ENCODE measurements at regions of chr14 and their contacts with region 1.

Region 1: GRCh38 chr14:63276492-63277342 is 42.0 kb downstream of the GPHB5 start:
- DNase-seq: no peak
- ATAC-seq: peak; percentile 49
- H3K4me3 ChIP-seq: no peak overlapping the region
- H3K4me1 ChIP-seq: no peaks in the 10 kb centered on the region
- CTCF ChIP-seq: peak; percentile 43

Region 2: GRCh38 chr14:62162998-62163589 is 1113.6 kb before region 1 on chr14:
- intact Hi-C with region 1: loop called in 1 of 2 experiments (anchors 10 kb)
- DNase-seq: peak in 1 of 3 donors; percentile 10
- ATAC-seq: no peak
- H3K4me3 ChIP-seq: no peak overlapping the region
- H3K4me1 ChIP-seq: no peaks in the 10 kb centered on the region
- CTCF ChIP-seq: no peak

Region 3: GRCh38 chr14:63174760-63175211 is 101.9 kb before region 1 on chr14:
- intact Hi-C with region 1: loop called in 1 of 2 experiments (anchors 5 kb)
- DNase-seq: peak in 1 of 3 donors; percentile 15
- ATAC-seq: no peak
- H3K4me3 ChIP-seq: no peak overlapping the region
- H3K4me1 ChIP-seq: no peaks in the 10 kb centered on the region
- CTCF ChIP-seq: no peak

Region 4: GRCh38 chr14:63203618-63204406 is 72.9 kb before region 1 on chr14:
- intact Hi-C with region 1: no loop called
- DNase-seq: peak; percentile 34 to 58 (median 52)
- ATAC-seq: peak; percentile 73
- H3K4me3 ChIP-seq: no peak overlapping the region
- H3K4me1 ChIP-seq: no peaks in the 10 kb centered on the region
- CTCF ChIP-seq: no peak

Region 5: DNA sequence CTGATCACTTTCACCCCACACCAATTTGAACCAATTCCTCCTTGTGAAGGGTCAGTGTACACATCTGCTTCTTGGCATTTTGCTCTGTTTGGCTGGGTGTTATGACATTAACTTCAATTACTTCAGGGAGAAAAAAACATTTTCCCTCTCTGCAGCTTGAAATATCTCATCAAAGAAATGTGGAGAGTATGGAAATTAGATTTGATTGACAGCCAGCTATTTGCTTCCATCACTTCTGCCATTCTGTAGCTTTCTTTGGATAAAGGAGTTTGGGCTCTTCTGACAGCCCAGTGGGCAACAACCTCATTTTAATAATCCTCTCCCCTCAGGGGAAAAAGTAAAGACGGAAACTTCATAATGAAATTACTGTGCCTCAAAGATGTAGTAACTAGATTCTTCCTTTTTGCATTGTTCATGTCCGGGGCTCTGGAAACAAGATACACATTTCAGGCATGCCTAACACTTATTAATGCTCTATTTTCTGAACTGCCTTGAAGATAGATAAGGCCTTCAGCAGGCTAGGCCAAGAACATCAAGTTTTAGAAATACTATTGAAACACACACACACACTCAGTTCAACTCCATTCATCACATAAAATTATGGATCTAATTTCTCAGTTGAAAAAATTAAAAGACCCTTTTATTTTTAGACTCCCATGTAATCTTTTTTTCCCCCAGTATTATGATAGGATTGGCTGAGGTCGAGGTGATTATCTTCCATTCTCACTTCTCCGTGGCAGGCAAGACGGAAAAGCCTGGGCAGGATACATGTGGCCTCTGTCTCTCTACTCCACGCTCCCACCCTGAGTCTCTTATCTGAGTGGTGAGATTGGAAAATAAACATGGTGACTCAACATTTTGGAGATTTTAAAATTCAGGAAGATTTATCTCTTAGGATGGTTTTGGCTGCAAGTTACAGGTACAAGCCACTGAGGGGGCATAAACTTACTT is 52.3 kb after region 1 on chr14:
- intact Hi-C with region 1: no loop called
- DNase-seq: no peak
- ATAC-seq: no peak
- H3K4me3 ChIP-seq: no peak overlapping the region
- H3K4me1 ChIP-seq: no peaks in the 10 kb centered on the region
- CTCF ChIP-seq: no peak

Region 6: DNA sequence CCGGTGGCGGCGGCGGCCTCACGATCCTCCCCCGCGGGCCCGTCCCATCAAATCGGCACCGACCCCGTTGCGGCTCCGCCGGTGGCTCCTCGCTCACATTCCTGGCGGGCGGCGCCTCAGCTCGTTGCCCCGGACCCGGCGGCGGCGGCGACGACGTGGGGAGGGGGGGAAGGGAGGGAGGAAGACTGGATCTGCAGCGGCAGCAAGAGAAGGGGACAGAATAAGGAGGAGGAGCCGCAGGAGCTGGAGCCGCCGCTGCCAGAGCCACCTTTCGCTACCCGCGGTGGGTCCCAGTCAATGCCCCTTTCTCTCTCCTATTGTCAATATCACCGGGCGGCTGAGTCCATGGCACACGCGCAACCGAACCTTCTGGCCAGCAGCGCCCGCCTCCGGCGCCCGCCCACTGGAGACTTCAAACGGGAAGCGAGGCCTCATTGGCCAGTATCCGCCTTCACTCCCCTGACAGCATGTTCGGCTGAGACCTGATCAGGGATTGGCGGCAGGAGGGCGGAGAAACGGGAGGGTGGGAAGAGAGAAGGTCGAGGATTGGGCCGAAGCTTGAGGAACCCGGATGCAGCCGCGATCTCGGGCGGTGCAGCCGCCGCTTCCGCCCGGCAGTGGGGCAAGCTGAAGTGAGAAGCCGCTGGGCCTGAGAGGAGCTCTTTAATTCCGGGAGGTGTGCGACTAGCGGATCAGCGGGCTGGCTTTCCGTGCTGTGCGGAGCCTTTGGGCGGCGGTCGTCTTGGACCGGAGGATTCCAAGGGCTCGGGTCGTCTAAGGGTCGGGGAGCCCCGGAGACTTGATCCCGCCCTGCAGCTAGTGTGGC is 266.5 kb after region 1 on chr14 and contains the start of gene PPP2R5E:
- intact Hi-C with region 1: no loop called
- DNase-seq: peak; percentile 98
- ATAC-seq: peak; percentile 97
- H3K4me3 ChIP-seq: peak within 1 kb of the TSS; percentile 86
- H3K4me1 ChIP-seq: peaks cover 19% of the 10 kb centered on the region
- CTCF ChIP-seq: no peak
- total RNA-seq, gene PPP2R5E: 45.3 to 54.1 (median 51.6) TPM